Naive thymus-derived CD4-positive, alpha-beta T cell (primary cell): ENCODE measurements at regions of chr12 and their contacts with region 1.

Region 1: GRCh38 chr12:56359851-56360767 is at the start of gene STAT2:
- DNase-seq: peak; percentile 94 to 100 (median 99)
- ATAC-seq: peak; percentile 97
- H3K4me3 ChIP-seq: peak within 1 kb of the TSS; percentile 89
- H3K4me3 Mint-ChIP-seq: peak within 1 kb of the TSS; percentile 83 to 99 (median 96)
- H3K27ac ChIP-seq: peak within 1 kb of the TSS; percentile 79
- H3K27ac Mint-ChIP-seq: peak within 1 kb of the TSS; percentile 90 to 98 (median 96)
- H3K4me1 ChIP-seq: peaks cover 16 to 17% of the 10 kb centered on the region in 2 donors
- H3K4me1 Mint-ChIP-seq: peaks cover 14 to 40% (median 27%) of the 10 kb centered on the region in 7 donors
- H3K27me3 ChIP-seq: no peaks in the 10 kb centered on the region
- H3K27me3 Mint-ChIP-seq: no peaks in the 10 kb centered on the region
- total RNA-seq, gene STAT2: 119 to 291 (median 182) TPM

Region 2: DNA sequence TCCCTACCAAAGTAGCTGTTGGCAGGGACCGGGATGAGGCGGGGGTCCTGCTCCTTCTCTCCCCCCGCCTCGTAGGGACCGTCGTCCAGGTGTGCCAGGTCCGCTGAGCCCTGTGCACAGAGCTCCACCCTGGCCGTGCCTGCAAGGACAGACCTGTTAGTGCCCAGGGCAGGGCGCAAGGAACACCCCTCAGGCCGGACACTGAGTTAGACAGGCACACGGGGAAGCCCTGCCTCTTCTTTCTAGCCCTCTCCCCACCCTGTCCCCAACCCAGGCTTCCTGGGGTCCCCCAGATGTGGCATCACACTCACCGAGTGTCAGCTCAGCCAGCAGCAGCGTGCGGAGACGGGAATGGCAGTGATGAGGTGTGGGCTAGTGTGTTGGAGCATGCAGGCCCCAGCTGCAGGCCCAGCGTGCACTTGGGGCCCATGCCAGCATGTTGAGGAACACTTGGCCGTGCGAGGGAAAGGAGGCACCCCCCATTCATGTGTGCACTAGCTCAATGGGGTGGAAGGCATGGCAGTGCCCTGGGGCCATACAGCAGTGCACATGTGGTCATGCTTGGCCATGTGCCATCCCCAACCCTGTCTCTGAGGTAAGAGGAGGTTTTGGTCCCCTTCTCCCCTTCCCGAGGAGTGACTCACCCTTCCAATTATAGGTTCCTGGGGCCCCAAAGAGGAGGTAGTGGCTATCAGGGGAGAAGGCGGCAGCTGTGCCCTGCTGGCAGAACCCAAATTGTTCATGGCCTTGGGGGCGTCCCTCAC is 659.7 kb before region 1 on chr12:
- CTCF ChIA-PET with region 1: no interaction called
- POLR2A ChIA-PET with region 1: no interaction called
- intact Hi-C with region 1: no loop called
- DNase-seq: no peak
- ATAC-seq: no peak
- H3K4me3 ChIP-seq: no peak overlapping the region
- H3K4me3 Mint-ChIP-seq: no peak overlapping the region
- H3K27ac ChIP-seq: no peak overlapping the region
- H3K27ac Mint-ChIP-seq: no peak overlapping the region
- H3K4me1 ChIP-seq: no peaks in the 10 kb centered on the region
- H3K4me1 Mint-ChIP-seq: peaks cover 0 to 4% (median 0%) of the 10 kb centered on the region in 7 donors
- H3K27me3 ChIP-seq: no peaks in the 10 kb centered on the region
- H3K27me3 Mint-ChIP-seq: peaks cover 0 to 12% (median 0%) of the 10 kb centered on the region in 5 donors

Region 3: GRCh38 chr12:56127888-56128669 is 232.0 kb before region 1 on chr12 and contains the start of gene ESYT1:
- CTCF ChIA-PET with region 1: interaction called, 3 read pairs
- POLR2A ChIA-PET with region 1: no interaction called
- intact Hi-C with region 1: loop called in 1 of 2 experiments (anchors 2 kb)
- DNase-seq: peak; percentile 75 to 100 (median 98)
- ATAC-seq: peak; percentile 94
- H3K4me3 ChIP-seq: peak within 1 kb of the TSS; percentile 77
- H3K4me3 Mint-ChIP-seq: peak within 1 kb of the TSS; percentile 95 to 100 (median 98)
- H3K27ac ChIP-seq: peak within 1 kb of the TSS; percentile 84
- H3K27ac Mint-ChIP-seq: peak within 1 kb of the TSS; percentile 86 to 99 (median 91)
- H3K4me1 ChIP-seq: peaks cover 39 to 54% of the 10 kb centered on the region in 2 donors
- H3K4me1 Mint-ChIP-seq: peaks cover 40 to 76% (median 65%) of the 10 kb centered on the region in 7 donors
- H3K27me3 ChIP-seq: no peaks in the 10 kb centered on the region
- H3K27me3 Mint-ChIP-seq: no peaks in the 10 kb centered on the region
- total RNA-seq, gene ESYT1: 121 to 300 (median 221) TPM

Region 4: DNA sequence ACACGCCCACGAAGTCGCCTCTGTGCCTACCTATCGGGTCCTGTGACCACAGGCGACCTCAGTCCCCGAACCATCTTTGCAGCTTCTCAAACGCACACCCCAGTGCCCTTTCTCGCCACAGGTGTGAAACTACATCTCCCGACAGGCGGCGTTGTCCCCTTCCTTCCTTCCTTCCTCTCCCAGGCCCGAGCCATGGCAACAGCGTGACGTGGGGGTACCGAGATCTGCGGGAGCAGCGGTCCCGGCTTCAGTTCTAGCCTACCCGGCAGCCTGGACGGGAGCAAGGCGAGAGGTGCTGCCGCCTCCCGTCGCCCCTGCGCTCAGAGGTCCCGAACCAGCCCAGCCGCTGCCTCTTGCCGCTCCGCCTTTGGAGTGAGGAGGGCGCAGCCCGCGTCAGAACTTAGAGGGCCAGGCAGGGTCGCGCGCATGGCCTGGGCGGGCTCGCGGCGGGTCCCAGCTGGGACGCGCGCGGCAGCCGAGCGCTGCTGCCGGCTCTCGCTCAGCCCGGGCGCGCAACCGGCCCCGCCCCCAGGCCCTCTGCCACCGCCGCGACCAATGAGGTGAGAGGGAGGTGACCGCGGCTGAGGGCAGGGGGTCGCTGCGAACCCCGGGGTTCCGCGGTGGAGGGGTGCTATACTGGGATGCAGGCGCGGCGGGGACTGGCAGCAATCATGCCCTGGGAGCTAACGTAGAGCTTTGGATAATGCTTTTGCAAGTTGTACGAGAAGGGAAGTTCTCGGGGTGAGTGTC is 93.2 kb before region 1 on chr12 and contains the start of gene COQ10A:
- CTCF ChIA-PET with region 1: no interaction called
- POLR2A ChIA-PET with region 1: interaction called, 5 read pairs
- intact Hi-C with region 1: loop called (anchors 1 kb)
- DNase-seq: peak; percentile 78 to 92 (median 89)
- ATAC-seq: peak; percentile 93
- H3K4me3 ChIP-seq: peak within 1 kb of the TSS; percentile 88
- H3K4me3 Mint-ChIP-seq: peak within 1 kb of the TSS; percentile 83 to 100 (median 96)
- H3K27ac ChIP-seq: peak within 1 kb of the TSS; percentile 94
- H3K27ac Mint-ChIP-seq: peak within 1 kb of the TSS; percentile 89 to 97 (median 94)
- H3K4me1 ChIP-seq: peaks cover 0 to 8% of the 10 kb centered on the region in 2 donors
- H3K4me1 Mint-ChIP-seq: peaks cover 0 to 22% (median 20%) of the 10 kb centered on the region in 7 donors
- H3K27me3 ChIP-seq: no peaks in the 10 kb centered on the region
- H3K27me3 Mint-ChIP-seq: peaks cover 0 to 2% (median 0%) of the 10 kb centered on the region in 5 donors
- total RNA-seq, gene COQ10A: 22.5 to 39.4 (median 31.5) TPM

Region 5: GRCh38 chr12:56341616-56342015 is 18.5 kb before region 1 on chr12:
- CTCF ChIA-PET with region 1: interaction called, 10 read pairs
- POLR2A ChIA-PET with region 1: interaction called, 156 read pairs
- intact Hi-C with region 1: loop called (anchors 1 kb)
- DNase-seq: no peak
- ATAC-seq: no peak
- H3K4me3 ChIP-seq: no peak overlapping the region
- H3K4me3 Mint-ChIP-seq: no peak overlapping the region
- H3K27ac ChIP-seq: peak overlapping the region; percentile 54
- H3K27ac Mint-ChIP-seq: peak overlapping the region in 8 of 9 donors; percentile 48 to 99 (median 76)
- H3K4me1 ChIP-seq: peaks cover 22 to 24% of the 10 kb centered on the region in 2 donors
- H3K4me1 Mint-ChIP-seq: peaks cover 16 to 53% (median 41%) of the 10 kb centered on the region in 7 donors
- H3K27me3 ChIP-seq: no peaks in the 10 kb centered on the region
- H3K27me3 Mint-ChIP-seq: no peaks in the 10 kb centered on the region

Region 6: DNA sequence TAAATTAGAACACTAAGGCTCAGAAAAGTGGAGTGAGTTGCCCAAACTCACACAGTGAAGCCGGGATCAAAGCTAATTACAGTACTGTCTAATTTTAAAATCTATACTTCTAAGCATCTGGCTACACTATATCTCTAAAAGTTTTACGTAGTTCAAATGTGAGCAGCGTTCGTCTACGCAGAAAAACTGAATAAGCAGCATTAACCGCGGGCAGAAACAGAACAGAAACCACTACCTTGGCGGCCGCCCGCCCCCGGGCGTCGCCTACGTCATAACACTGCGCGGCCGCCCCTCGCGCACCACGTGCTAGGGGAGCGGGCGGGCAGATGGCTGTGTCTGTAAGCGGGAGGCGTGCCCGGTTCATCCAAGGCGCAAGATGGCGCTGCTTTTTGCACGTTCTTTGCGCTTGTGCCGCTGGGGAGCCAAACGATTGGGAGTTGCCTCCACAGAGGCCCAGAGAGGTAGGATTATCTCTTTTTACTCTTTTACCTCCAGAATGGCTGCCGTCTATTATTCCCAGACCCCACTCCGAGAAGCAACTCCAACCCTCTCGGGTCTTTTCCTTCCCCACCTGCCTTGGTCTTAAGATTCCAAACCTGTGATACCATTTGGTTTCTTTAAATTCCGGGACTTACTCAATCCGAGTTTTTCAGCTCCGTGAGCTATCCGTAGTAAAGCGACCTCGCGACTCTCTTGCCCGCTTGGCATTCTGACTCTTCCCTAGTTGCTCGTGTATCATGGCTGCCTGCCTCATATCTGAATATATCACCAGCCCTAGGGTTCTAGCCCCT is 108.3 kb after region 1 on chr12 and contains the start of gene SPRYD4:
- CTCF ChIA-PET with region 1: interaction called, 17 read pairs
- POLR2A ChIA-PET with region 1: interaction called, 11 read pairs
- intact Hi-C with region 1: loop called (anchors 1 kb)
- DNase-seq: peak; percentile 89 to 97 (median 96)
- ATAC-seq: peak; percentile 99
- H3K4me3 ChIP-seq: peak within 1 kb of the TSS; percentile 99
- H3K4me3 Mint-ChIP-seq: peak within 1 kb of the TSS; percentile 90 to 99 (median 97)
- H3K27ac ChIP-seq: peak within 1 kb of the TSS; percentile 87
- H3K27ac Mint-ChIP-seq: peak within 1 kb of the TSS; percentile 92 to 99 (median 98)
- H3K4me1 ChIP-seq: peaks cover 12 to 20% of the 10 kb centered on the region in 2 donors
- H3K4me1 Mint-ChIP-seq: peaks cover 6 to 51% (median 26%) of the 10 kb centered on the region in 7 donors
- H3K27me3 ChIP-seq: no peaks in the 10 kb centered on the region
- H3K27me3 Mint-ChIP-seq: no peaks in the 10 kb centered on the region
- total RNA-seq, gene SPRYD4: 5.2 to 7.5 (median 7.2) TPM